CD8-positive, alpha-beta T cell (primary cell): ENCODE measurements at regions of chr5 and their contacts with region 1.

Region 1: DNA sequence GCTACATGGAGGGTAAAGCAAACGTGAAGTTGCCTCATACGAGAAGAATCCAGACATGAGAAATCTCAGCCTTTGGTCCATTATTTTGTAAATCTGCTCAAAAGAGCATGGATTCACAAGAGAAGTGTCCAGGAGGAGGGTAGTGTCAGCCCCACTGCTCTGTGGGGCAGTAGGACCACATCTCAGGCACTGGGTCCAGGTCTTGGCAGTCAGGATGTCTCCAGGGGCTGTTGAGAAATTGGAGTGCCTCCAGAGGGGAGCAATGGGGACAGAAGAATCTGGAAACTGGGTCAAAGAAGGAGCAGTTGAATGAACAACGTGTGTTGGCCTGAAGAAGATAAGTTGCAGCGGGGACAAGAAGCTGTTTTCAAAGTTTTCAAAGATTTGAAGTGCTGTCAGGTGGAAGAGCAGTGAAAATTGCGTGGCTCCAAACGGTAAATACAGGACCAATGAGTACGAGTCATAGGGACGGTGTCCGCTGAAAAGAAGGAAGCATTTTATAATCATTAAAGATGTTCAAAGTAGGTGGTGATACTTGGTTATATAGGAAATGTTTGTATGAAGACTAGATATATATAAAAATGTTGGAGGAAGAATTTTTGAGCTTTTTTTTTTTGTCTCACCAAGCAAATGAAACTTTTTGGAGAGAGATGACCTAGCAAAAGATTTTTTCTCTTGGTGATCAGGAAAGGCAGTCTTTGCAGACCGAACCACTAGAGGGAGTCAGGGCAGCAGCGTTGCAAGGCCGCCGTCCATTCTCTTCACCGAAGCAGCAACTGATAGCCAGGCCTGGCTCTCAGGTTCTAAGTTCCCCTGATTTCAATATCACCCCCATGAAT is 57.1 kb upstream of the ZBED3 start:
- DNase-seq: peak in 8 of 9 experiments; percentile 27 to 76 (median 62)
- ATAC-seq: peak; percentile 77
- H3K4me3 ChIP-seq: no peak overlapping the region
- H3K4me3 Mint-ChIP-seq: no peak overlapping the region
- H3K27ac ChIP-seq: no peak overlapping the region
- H3K27ac Mint-ChIP-seq: no peak overlapping the region
- H3K4me1 ChIP-seq: no peaks in the 10 kb centered on the region
- H3K4me1 Mint-ChIP-seq: peaks cover 2% of the 10 kb centered on the region
- H3K27me3 ChIP-seq: no peaks in the 10 kb centered on the region
- H3K27me3 Mint-ChIP-seq: no peaks in the 10 kb centered on the region
- CTCF ChIP-seq: peak; percentile 73

Region 2: DNA sequence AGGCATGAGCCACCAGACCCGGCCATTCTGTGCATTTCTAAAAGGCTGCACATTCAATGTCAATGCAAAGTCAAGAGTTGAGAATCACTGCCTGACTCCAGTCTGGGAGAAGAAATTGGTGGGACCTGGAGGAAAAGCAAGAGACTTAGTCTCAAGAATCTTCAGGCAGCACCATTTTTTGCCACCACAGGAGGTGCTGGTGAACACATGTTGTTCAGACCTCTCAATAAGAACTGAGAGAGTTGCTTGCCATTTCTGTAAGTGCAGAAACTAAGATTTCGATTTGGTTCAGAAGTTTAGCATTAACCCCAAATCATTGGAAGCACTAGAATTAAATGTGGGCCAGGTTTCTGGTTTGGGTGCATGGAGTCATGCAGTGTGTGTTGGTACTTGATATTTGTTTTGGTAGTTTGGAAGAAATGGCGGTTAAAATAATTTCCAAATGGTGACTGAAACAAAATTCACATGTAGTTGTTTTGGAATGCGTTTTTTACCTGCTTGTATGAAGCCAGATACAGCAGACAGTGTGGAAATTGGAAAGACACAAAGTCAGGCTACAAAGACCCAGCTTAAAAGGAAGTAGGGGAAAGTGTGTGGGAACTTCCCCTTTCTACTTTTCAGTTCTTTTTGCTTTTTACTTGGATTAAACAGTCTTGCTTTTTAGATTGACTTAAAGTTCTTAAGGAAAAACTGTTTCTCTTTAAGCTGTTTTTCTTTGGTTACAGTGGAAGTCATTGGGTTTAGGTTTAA is 86.7 kb after region 1 on chr5:
- CTCF ChIA-PET with region 1: no interaction called
- POLR2A ChIA-PET with region 1: no interaction called
- intact Hi-C with region 1: loop called in 1 of 2 experiments (anchors 5 kb)
- DNase-seq: no peak
- ATAC-seq: no peak
- H3K4me3 ChIP-seq: no peak overlapping the region
- H3K4me3 Mint-ChIP-seq: no peak overlapping the region
- H3K27ac ChIP-seq: no peak overlapping the region
- H3K27ac Mint-ChIP-seq: no peak overlapping the region
- H3K4me1 ChIP-seq: no peaks in the 10 kb centered on the region
- H3K4me1 Mint-ChIP-seq: peaks cover 3% of the 10 kb centered on the region
- H3K27me3 ChIP-seq: peaks cover 0 to 3% of the 10 kb centered on the region in 2 experiments
- H3K27me3 Mint-ChIP-seq: peaks cover 7% of the 10 kb centered on the region
- CTCF ChIP-seq: peak; percentile 16

Region 3: GRCh38 chr5:77239126-77239741 is 95.0 kb after region 1 on chr5:
- CTCF ChIA-PET with region 1: interaction called, 3 read pairs
- POLR2A ChIA-PET with region 1: no interaction called
- intact Hi-C with region 1: loop called (anchors 1 to 5 kb)
- DNase-seq: peak in 2 of 9 experiments; percentile 8 to 37
- ATAC-seq: no peak
- H3K4me3 ChIP-seq: no peak overlapping the region
- H3K4me3 Mint-ChIP-seq: no peak overlapping the region
- H3K27ac ChIP-seq: no peak overlapping the region
- H3K27ac Mint-ChIP-seq: no peak overlapping the region
- H3K4me1 ChIP-seq: no peaks in the 10 kb centered on the region
- H3K4me1 Mint-ChIP-seq: no peaks in the 10 kb centered on the region
- H3K27me3 ChIP-seq: no peaks in the 10 kb centered on the region
- H3K27me3 Mint-ChIP-seq: peaks cover 19% of the 10 kb centered on the region
- CTCF ChIP-seq: peak; percentile 34